ENCODE measurements at regions of chr17 and their contacts with region 1.

Region 1: DNA sequence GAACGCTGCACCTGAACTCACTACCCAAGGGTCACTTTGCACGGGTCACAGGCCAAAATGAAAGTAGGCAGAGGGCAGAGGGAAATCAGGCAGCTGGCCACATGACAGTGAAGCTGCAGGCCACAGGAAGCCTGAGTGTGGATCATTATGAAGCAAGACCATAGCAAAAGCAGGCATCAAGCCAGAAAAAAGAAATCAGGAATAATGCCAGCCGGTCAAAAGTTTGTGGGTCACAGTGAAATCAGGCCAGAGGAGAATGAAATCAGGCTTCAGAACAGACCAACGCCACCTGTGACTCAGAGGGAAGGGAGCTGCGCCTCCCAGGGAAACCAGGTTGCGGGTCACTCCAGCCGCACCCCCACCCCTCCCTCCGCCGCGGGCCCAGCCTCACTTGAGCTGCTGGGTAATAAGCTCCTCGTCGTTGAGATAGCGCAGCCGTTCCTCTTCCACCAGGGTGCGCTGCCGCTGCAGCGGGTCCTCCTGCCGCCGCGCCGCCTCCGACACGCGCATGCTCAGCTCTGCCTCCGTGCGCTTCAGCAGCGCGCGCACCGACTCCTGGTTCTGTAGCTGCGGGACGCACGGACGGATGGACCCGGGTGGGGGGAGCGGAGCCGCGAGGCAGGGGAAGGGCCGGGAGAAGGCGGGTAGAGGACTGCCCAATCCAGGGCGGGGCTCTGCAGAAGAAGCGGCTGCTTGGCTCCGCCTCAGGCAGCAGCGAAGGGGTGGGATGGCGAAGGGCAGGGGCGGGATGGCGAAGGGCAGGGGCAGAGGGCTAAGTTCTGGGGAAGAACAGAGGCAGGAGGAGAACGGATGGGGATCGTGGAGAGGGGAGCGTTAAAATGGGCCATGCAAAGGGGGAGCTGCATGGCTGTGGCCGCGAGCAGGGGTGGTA is 47.7 kb downstream of the SRCIN1 start:
- DNase-seq: peak; percentile 91
- H3K4me3 Mint-ChIP-seq: peak overlapping the region; percentile 87
- H3K27ac Mint-ChIP-seq: no peak overlapping the region
- H3K4me1 Mint-ChIP-seq: peaks cover 30% of the 10 kb centered on the region
- H3K27me3 Mint-ChIP-seq: peaks cover 55% of the 10 kb centered on the region

Region 2: GRCh38 chr17:38584350-38584925 is 26.4 kb after region 1 on chr17:
- CTCF ChIA-PET with region 1: interaction called, 46 read pairs
- POLR2A ChIA-PET with region 1: interaction called, 4 read pairs
- DNase-seq: peak; percentile 64
- H3K4me3 Mint-ChIP-seq: no peak overlapping the region
- H3K27ac Mint-ChIP-seq: no peak overlapping the region
- H3K4me1 Mint-ChIP-seq: peaks cover 5% of the 10 kb centered on the region
- H3K27me3 Mint-ChIP-seq: peaks cover 84% of the 10 kb centered on the region

Region 3: GRCh38 chr17:38605888-38606645 is 48.0 kb after region 1 on chr17 and contains the start of gene SRCIN1:
- CTCF ChIA-PET with region 1: interaction called, 42 read pairs
- POLR2A ChIA-PET with region 1: no interaction called
- DNase-seq: peak; percentile 64
- H3K4me3 Mint-ChIP-seq: peak within 1 kb of the TSS; percentile 67
- H3K27ac Mint-ChIP-seq: no peak within 1 kb of the TSS
- H3K4me1 Mint-ChIP-seq: peaks cover 10% of the 10 kb centered on the region
- H3K27me3 Mint-ChIP-seq: peaks cover 74% of the 10 kb centered on the region
- total RNA-seq, gene SRCIN1: 0.05 to 0.20 TPM

Region 4: DNA sequence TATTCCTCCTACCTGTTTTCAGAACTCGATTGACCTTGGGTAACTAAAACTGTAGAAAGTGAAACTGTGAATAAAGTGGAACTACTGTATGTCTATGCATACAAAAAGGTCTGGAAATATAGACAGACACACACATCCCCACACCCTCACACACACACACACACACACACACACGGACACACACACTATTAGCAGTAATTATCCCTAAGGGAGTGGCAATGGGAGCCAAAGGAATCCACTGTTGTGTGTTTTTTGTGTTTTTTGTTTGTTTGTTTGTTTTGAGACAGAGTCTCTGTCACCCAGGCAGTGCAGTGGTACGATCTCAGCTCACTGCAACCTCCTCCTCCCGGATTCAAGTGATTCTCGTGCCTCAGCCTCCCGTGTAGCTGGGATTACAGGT is 74.3 kb after region 1 on chr17:
- CTCF ChIA-PET with region 1: no interaction called
- POLR2A ChIA-PET with region 1: no interaction called
- DNase-seq: no peak
- H3K4me3 Mint-ChIP-seq: no peak overlapping the region
- H3K27ac Mint-ChIP-seq: no peak overlapping the region
- H3K4me1 Mint-ChIP-seq: no peaks in the 10 kb centered on the region
- H3K27me3 Mint-ChIP-seq: peaks cover 14% of the 10 kb centered on the region

Region 5: GRCh38 chr17:38674749-38675615 is 116.9 kb after region 1 on chr17 and contains the start of gene EPOP:
- CTCF ChIA-PET with region 1: interaction called, 217 read pairs
- POLR2A ChIA-PET with region 1: interaction called, 11 read pairs
- DNase-seq: peak; percentile 91
- H3K4me3 Mint-ChIP-seq: peak within 1 kb of the TSS; percentile 63
- H3K27ac Mint-ChIP-seq: no peak within 1 kb of the TSS
- H3K4me1 Mint-ChIP-seq: peaks cover 44% of the 10 kb centered on the region
- H3K27me3 Mint-ChIP-seq: peaks cover 27% of the 10 kb centered on the region
- total RNA-seq, gene EPOP: 10.2 to 10.3 TPM